Right ventricle myocardium superior (tissue), 1 donor: ENCODE measurements at regions of chr1 and their contacts with region 1.

Region 1: DNA sequence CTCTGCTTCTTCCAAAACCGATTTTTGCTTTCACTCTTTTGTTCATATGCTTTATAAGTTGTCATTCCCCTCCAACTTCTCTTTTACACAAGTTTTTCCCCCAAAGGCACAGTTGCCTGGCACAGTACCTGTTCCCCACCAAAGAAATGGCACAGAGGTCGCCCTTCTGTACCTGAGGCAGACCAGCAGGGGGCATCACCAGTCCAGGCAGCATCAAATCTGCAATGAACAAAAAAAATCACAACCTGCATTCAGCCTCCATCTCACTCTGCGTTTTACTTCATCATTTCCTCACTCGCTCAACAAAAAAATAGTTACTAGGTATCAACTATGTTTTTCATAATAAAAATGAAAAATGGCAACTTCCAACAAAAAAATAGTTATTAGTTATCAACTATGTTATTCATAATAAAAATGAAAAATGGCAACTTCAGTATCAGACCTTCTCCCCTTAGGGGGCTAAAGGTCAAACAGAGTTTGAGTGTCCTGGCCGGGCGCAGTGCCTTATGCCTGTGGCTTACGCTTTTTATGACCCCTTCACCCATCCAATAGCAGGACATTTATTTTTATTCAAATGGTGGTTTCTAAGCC is 4.1 kb downstream of the EIF2D start:
- DNase-seq: no peak
- ATAC-seq: no peak

Region 2: DNA sequence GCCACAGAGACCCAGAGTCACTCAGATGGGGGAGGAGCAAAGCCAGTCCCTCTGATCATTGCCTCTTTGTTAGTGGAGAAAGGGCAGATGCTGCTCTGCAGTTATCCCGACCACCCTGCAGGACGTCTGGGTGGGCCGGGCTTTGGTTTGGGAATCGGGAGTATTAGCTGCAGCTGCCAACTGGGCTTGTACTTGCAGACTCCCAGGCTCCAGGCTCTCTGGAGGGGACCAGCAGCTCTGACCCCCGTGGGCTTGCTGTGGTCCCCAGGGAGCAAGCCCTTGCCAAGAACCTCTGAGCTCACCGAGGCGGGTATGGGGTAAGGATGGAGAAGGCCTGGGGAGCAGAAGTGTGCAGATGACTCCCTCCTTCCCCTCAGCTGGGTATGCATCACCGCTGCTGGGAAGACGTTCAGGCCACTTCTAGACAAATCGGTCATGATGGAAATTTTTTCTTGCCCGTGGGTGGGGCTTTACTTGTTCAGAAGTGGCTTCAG is 98.1 kb after region 1 on chr1:
- intact Hi-C with region 1: no loop called
- DNase-seq: no peak
- ATAC-seq: peak; percentile 4

Region 3: DNA sequence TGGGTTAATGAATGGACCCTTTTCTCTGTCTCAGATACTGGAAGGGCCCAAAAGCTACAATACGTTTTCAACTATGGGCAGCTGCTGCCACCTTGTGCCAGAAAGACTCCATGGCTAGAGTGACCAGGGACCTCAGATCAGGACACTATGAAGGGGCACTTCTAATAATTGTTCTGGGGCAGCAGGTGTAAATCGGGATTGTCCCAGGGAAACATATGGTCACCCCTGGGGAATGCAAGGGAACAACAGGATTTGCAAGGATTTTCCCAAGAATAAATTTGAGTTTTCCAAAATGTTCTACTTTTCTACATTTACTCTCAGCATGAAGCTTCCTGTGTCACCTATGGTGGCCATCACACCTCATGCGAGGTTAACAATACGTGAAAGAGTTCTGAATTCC is 374.0 kb after region 1 on chr1:
- intact Hi-C with region 1: loop called (anchors 10 kb)
- DNase-seq: peak; percentile 57
- ATAC-seq: peak; percentile 87